HEK293 (cell line): ENCODE measurements at regions of chr1 and their contacts with region 1.

Region 1: DNA sequence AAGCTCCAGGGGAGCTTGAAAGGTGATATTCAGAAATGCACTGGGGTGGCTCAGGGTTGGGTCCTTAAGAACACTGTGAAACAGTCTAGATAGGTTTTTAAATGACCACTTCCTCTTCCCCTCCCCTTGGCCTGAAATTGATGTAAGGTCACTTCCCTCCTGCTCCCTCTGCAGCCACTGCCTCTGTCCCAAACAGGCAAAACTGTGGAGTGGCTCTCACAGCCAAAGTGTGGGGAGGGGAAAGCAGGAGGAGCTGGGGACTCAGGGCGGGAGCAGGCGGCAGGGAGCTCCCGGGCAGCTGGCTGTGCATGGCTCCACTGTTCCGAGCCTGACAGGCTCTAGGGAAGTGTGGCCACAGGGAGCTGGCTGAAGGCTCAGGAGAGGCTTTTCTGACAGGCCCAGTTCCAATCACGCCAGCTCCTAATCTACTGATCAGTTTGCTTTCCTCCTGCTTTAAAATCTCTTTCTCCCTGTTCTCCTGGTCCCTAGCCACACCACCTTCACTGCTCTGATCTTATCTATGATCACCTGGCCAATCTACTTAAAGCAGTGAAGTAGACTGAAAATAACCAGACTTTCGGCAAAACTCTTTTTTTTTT is 5.1 kb upstream of the CSRP1 start:
- H3K4me3 ChIP-seq: no peak overlapping the region
- H3K27ac ChIP-seq: no peak overlapping the region
- H3K4me1 ChIP-seq: no peaks in the 10 kb centered on the region
- CTCF ChIP-seq: no peak

Region 2: GRCh38 chr1:201295861-201296260 is 216.2 kb before region 1 on chr1:
- CTCF ChIA-PET with region 1: no interaction called
- POLR2A ChIA-PET with region 1: no interaction called
- H3K4me3 ChIP-seq: no peak overlapping the region
- H3K27ac ChIP-seq: no peak overlapping the region
- H3K4me1 ChIP-seq: no peaks in the 10 kb centered on the region
- CTCF ChIP-seq: no peak

Region 3: GRCh38 chr1:201436393-201436792 is 75.6 kb before region 1 on chr1:
- CTCF ChIA-PET with region 1: interaction called, 42 read pairs
- POLR2A ChIA-PET with region 1: no interaction called
- H3K4me3 ChIP-seq: no peak overlapping the region
- H3K27ac ChIP-seq: no peak overlapping the region
- H3K4me1 ChIP-seq: 0 out of 2 replicates have a peak, but pooled peaks cover 2% of the 10 kb centered on the region
- CTCF ChIP-seq: peak; percentile 56; the same call in 1 of the 2 replicates

Region 4: DNA sequence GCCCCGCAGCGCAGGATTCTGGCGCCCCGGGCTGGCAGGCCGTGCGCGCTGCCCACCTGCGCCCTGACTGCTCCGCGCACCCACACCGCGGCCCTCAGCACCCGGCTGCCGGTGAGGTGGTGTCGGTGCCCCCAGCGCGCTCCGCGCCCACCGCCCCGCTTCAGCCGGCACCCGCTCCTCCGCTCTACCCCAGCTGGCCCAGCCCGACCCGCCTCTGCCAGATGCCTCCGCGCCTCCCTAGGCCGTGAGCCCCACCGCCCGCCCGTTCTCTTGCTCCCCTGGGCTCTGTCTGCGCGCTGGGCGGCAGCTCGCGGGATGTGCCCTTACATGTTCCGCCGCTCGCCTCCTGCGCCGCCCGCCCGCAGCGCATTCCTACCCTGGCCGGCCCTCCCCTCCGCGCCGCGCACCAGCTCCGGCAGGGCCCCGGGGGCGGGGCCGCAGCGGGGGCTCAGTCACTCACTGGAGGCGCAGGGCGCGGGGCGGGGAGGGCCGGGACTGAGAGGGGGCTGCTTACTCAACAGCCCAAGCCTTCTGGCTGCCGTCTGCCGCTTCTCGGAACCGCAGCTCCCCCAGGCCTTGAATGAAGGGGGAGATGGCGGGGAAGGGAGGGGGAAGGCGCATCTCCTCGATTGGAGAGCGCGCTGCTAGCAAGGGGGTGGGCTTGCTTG is 43.1 kb before region 1 on chr1 and contains the start of gene PHLDA3:
- CTCF ChIA-PET with region 1: interaction called, 15 read pairs
- POLR2A ChIA-PET with region 1: interaction called, 14 read pairs
- H3K4me3 ChIP-seq: peak within 1 kb of the TSS; percentile 71
- H3K27ac ChIP-seq: peak within 1 kb of the TSS; percentile 99
- H3K4me1 ChIP-seq: no peaks in the 10 kb centered on the region; the same call in 1 of the 2 replicates
- CTCF ChIP-seq: no peak

Region 5: DNA sequence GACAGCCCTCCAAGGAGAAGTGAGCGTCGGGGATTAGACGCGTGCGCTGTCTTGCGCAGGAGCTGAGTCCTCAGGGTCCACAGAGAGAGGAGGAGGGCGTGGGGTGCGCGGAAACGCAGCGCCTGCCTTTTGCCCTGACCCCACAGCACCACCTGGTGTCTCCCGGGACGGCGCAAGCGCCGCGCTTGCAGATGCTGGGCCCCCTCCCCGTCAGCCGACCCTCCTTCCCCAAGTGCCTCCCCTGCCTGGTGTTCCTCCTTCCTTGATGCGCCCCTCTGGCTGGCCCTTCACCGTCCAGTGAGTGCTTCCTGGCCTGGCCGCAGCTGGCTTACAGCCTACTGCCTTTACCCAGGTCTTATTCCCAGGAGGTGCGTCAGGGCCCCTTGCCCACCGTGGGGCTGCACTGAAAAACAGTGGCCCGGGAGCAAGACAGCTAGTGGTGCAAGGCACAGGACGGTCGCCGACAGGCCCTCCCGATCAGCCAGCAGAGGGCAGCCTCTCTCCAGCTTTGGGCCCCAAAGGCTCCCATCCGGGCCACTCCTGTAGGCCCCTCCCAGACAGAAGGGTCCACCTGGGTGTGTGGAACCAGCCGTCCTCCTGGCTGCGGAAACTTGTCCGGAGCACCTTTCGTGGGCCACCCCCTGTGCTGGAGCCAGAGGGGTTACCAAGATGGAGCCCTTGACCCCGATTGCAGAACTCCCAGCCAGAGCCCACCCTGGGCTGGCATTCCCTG is 30.1 kb before region 1 on chr1:
- CTCF ChIA-PET with region 1: interaction called, 471 read pairs
- POLR2A ChIA-PET with region 1: interaction called, 42 read pairs
- H3K4me3 ChIP-seq: no peak overlapping the region
- H3K27ac ChIP-seq: no peak overlapping the region
- H3K4me1 ChIP-seq: no peaks in the 10 kb centered on the region
- CTCF ChIP-seq: peak; percentile 93

Region 6: GRCh38 chr1:201500670-201501120 is 11.3 kb before region 1 on chr1:
- CTCF ChIA-PET with region 1: interaction called, 74 read pairs
- POLR2A ChIA-PET with region 1: interaction called, 4 read pairs
- H3K4me3 ChIP-seq: no peak overlapping the region
- H3K27ac ChIP-seq: no peak overlapping the region
- H3K4me1 ChIP-seq: no peaks in the 10 kb centered on the region; the same call in none of the 2 replicates
- CTCF ChIP-seq: no peak

Region 7: GRCh38 chr1:201530741-201531531 is 18.9 kb after region 1 on chr1:
- CTCF ChIA-PET with region 1: interaction called, 36 read pairs
- POLR2A ChIA-PET with region 1: no interaction called
- H3K4me3 ChIP-seq: no peak overlapping the region
- H3K27ac ChIP-seq: no peak overlapping the region
- H3K4me1 ChIP-seq: peaks cover 4% of the 10 kb centered on the region; the same call in 1 of the 2 replicates
- CTCF ChIP-seq: peak; percentile 87

Region 8: GRCh38 chr1:201709564-201710295 is 197.7 kb after region 1 on chr1:
- CTCF ChIA-PET with region 1: interaction called, 16 read pairs
- POLR2A ChIA-PET with region 1: no interaction called
- H3K4me3 ChIP-seq: no peak overlapping the region
- H3K27ac ChIP-seq: no peak overlapping the region
- H3K4me1 ChIP-seq: peaks cover 12% of the 10 kb centered on the region
- CTCF ChIP-seq: peak; percentile 83